ENCODE measurements at regions of chr10 and their contacts with region 1.

Region 1: GRCh38 chr10:86757114-86757932 is 904 bp downstream of the BMPR1A start:
- DNase-seq: no peak
- CTCF ChIP-seq: no peak

Region 2: DNA sequence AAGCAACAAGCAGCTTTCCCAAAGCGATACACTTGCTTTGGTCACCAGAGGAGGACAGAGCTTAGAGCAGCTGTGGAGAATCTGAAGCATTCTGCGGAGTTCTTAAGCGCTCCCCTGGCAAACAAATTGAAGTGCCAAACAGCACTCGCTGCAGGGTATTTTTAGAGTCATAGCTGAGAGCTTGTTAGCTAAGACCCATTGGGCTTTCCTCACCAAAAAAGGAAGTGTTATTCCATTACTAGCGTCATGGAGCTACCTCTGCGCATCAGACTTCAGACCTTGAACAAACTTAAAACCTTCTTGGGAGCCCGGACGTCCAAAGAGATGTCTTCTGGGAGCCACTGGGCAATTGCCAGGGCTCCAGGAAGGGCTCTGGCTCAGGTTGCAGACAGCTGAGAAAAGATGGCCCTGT is 24.1 kb before region 1 on chr10:
- CTCF ChIA-PET with region 1: interaction called, 10 read pairs
- POLR2A ChIA-PET with region 1: no interaction called
- DNase-seq: no peak
- CTCF ChIP-seq: no peak

Region 3: GRCh38 chr10:86768412-86769062 is 11.2 kb after region 1 on chr10:
- CTCF ChIA-PET with region 1: interaction called, 12 read pairs
- POLR2A ChIA-PET with region 1: interaction called, 4 read pairs
- DNase-seq: no peak
- CTCF ChIP-seq: no peak

Measured in GM10248 (cell line).